Posterior vena cava (tissue), 2 donors: ENCODE measurements at regions of chr3 and their contacts with region 1.

Region 1: DNA sequence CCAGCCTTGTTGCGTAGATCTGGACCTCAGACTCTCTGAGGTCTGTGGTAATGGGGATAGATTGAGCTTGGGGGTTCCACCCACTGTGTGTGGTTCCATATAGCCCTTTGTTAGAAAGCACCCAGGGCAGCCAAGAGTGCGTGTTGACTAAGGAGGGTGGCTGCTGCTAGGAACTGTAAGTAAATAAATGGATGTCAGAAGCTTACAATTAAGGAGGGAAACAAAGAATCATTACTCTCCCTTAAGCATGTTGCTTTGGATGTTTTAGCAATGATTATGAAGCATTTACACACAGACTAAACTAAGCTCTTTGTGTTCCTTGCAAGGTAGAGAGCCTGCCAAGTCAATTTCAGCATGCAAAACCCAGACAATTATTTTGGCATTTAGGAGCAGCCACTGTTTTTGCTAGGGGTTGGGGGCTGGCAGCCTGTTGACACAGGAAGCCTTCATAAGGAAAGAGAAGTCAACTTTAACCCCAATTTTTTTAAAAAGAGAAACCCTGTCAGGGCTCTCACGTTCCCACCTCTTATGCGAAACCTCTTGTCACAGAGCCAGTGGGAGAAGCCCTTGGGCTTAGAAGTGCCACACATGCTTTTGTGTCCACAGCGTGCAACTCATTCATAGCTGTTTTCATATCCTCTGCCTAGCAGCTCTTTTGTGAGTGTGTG is 127.8 kb downstream of the CMSS1 start:
- DNase-seq: peak; percentile 71

Region 2: GRCh38 chr3:99875929-99876841 is 69.3 kb before region 1 on chr3:
- intact Hi-C with region 1: loop called in 1 of 2 experiments (anchors 10 kb)
- DNase-seq: peak; percentile 96

Region 3: GRCh38 chr3:99965077-99965476 is 19.6 kb after region 1 on chr3:
- intact Hi-C with region 1: loop called in 1 of 2 experiments (anchors 2 kb)
- DNase-seq: no peak

Region 4: GRCh38 chr3:100045696-100046095 is 100.2 kb after region 1 on chr3:
- intact Hi-C with region 1: loop called in 1 of 2 experiments (anchors 5 kb)
- DNase-seq: peak; percentile 85

Region 5: DNA sequence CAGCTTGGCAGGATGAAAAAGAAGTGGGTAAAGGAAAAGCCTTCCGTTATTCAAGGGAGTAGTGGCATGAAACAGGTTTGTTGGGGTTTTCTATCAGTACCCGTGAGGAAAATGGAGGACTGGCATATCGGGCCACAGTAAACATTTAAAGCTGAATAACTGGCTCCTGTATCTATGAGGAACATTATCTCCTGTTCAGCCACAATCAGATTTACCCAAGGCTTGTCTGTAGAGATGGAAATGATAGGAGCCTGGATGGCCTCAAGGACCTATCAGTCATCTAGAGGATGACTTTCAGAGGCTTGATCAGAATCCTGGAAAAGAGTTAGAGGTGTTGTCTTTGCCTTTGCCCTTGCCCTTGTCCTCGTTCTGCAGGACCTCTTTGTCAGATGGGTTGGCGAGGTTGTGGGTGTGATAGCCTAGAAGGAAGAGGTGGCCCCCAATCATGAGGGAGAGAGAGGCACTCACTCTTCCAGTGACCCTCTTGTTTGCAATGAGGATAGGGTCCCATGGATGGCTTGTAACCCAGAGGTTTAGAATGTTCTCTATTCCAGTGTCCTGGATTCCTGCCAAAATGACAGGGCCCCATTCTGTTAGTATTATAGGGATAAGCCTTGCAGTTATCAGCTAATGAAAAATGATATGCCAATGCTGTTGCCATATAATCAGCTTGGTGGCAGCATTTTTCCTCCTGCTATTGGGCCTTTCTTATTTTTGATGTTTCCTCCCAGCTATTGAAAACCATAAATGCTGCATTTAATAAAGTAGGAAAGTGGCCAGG is 1590.6 kb after region 1 on chr3:
- intact Hi-C with region 1: loop called in 1 of 2 experiments (anchors 5 kb)
- DNase-seq: no peak